ENCODE measurements at regions of chr5 and their contacts with region 1.

Region 1: GRCh38 chr5:68272289-68272688 is 56.7 kb downstream of the PIK3R1 start:
- DNase-seq: no peak
- H3K4me3 Mint-ChIP-seq: no peak overlapping the region
- H3K27ac Mint-ChIP-seq: no peak overlapping the region
- H3K4me1 Mint-ChIP-seq: peaks cover 89% of the 10 kb centered on the region
- H3K27me3 Mint-ChIP-seq: no peaks in the 10 kb centered on the region

Region 2: DNA sequence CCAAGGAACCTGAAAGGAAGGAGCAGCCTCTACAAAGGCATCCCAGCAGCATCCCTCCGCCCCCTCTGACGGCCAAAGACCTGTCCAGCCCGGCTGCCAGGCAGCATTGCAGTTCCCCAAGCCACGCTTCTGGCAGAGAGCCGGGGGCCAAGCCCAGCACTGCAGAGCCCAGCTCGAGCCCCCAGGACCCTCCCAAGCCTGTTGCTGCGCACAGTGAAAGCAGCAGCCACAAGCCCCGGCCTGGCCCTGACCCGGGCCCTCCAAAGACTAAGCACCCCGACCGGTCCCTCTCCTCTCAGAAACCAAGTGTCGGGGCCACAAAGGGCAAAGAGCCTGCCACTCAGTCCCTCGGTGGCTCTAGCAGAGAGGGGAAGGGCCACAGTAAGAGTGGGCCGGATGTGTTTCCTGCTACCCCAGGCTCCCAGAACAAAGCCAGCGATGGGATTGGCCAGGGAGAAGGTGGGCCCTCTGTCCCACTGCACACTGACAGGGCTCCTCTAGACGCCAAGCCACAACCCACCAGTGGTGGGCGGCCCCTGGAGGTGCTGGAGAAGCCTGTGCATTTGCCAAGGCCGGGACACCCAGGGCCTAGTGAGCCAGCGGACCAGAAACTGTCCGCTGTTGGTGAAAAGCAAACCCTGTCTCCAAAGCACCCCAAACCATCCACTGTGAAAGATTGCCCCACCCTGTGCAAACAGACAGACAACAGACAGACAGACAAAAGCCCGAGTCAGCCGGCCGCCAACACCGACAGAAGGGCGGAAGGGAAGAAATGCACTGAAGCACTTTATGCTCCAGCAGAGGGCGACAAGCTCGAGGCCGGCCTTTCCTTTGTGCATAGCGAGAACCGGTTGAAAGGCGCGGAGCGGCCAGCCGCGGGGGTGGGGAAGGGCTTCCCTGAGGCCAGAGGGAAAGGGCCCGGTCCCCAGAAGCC is 1106.5 kb before region 1 on chr5:
- CTCF ChIA-PET with region 1: no interaction called
- POLR2A ChIA-PET with region 1: no interaction called
- intact Hi-C with region 1: loop called (anchors 5 kb)
- DNase-seq: peak; percentile 89
- H3K4me3 Mint-ChIP-seq: peak overlapping the region; percentile 91
- H3K27ac Mint-ChIP-seq: peak overlapping the region; percentile 98
- H3K4me1 Mint-ChIP-seq: peaks cover 70% of the 10 kb centered on the region
- H3K27me3 Mint-ChIP-seq: no peaks in the 10 kb centered on the region

Region 3: DNA sequence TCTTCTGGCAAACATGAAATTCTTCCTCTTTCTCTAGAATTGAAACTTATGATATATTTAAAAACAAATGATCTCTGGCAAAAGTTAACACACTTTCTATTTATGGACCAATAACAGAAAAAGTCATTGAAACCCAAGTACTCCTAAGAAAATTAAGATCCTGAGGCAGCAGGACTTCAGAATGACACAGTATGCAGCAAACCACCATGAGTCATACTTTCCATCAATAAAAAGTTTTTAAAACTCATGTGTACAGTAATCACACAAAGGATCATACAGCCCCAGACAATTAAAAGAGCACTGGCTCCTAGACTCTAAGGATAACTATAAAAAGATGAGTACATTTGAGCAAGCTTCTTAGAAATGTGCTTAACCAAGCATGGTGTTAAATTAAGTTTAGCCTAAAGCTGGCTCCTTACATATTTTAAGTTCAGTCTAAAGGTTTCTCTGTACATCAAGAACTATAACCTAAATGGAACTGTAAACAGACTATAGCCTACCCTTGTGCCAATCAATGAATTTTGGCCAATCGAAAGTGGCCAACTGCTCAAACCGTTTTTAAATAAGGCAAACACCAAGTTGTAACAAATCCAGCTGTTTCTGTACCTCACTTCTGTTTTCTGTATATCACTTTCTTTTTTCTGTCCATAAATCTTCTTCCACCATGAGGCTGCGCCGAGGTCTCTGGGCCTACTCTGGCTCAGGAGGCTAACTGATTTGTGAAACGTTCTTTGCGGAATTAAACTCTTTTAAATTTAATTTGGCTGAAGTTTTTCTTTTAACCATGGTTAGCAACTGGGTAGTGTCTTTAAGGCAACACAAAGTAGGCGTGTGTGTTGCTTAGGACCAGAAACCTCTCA is 288.8 kb before region 1 on chr5:
- CTCF ChIA-PET with region 1: no interaction called
- POLR2A ChIA-PET with region 1: no interaction called
- intact Hi-C with region 1: loop called (anchors 10 kb)
- DNase-seq: no peak
- H3K4me3 Mint-ChIP-seq: no peak overlapping the region
- H3K27ac Mint-ChIP-seq: no peak overlapping the region
- H3K4me1 Mint-ChIP-seq: peaks cover 2% of the 10 kb centered on the region
- H3K27me3 Mint-ChIP-seq: no peaks in the 10 kb centered on the region

Region 4: GRCh38 chr5:68239487-68239886 is 32.8 kb before region 1 on chr5:
- CTCF ChIA-PET with region 1: interaction called, 3 read pairs
- POLR2A ChIA-PET with region 1: no interaction called
- intact Hi-C with region 1: loop called (anchors 2 kb)
- DNase-seq: peak; percentile 88
- H3K4me3 Mint-ChIP-seq: peak overlapping the region; percentile 52
- H3K27ac Mint-ChIP-seq: peak overlapping the region; percentile 58
- H3K4me1 Mint-ChIP-seq: peaks cover 82% of the 10 kb centered on the region
- H3K27me3 Mint-ChIP-seq: no peaks in the 10 kb centered on the region

Region 5: DNA sequence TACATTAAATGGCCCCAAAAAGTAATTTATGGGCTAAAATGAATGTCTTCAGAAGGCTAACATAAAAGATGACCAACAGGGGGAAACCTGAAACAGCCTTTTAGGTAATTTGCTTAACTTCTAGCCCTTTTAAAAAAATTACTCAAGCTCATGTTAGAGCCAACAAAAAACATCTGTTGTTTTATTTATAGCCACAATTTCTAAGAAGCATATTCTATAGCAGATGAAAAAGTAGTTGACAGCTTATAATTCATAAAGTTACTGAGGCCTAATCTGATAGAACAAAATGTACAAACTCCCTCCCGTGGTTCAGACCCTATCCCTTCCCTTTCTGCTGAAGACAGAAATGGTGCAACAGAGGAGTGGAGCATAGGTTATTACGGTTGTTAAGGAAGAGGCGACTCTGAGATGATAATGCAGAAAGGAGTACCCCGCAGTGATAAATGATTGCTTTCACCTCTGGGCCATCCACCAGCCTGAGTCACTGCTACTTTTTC is 10.7 kb before region 1 on chr5:
- CTCF ChIA-PET with region 1: interaction called, 22 read pairs
- POLR2A ChIA-PET with region 1: interaction called, 3 read pairs
- intact Hi-C with region 1: loop called (anchors 1 kb)
- DNase-seq: no peak
- H3K4me3 Mint-ChIP-seq: no peak overlapping the region
- H3K27ac Mint-ChIP-seq: peak overlapping the region; percentile 61
- H3K4me1 Mint-ChIP-seq: peaks cover 82% of the 10 kb centered on the region
- H3K27me3 Mint-ChIP-seq: no peaks in the 10 kb centered on the region

Region 6: GRCh38 chr5:68415177-68416085 is 143.1 kb after region 1 on chr5:
- CTCF ChIA-PET with region 1: no interaction called
- POLR2A ChIA-PET with region 1: no interaction called
- intact Hi-C with region 1: no loop called
- DNase-seq: no peak
- H3K4me3 Mint-ChIP-seq: no peak overlapping the region
- H3K27ac Mint-ChIP-seq: no peak overlapping the region
- H3K4me1 Mint-ChIP-seq: peaks cover 7% of the 10 kb centered on the region
- H3K27me3 Mint-ChIP-seq: no peaks in the 10 kb centered on the region

Region 7: DNA sequence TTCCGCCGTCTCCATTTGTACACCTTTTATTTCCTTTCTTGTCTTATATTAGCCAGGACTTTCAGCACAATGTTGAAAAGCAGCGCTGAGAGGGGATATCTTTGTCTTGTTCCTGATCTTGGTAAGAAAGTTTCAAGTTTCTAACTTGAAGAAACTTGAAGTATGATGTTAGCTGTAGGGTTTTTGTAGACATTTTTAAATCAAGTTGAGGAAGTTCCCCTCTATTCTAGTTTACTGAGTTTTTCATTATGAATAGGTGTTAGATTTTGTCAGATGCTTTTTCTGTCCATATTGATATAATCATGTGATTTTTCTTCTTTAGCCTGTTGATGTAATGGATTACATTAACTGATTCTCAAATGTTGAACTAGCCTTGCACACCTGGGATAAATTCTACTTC is 368.9 kb after region 1 on chr5:
- CTCF ChIA-PET with region 1: no interaction called
- POLR2A ChIA-PET with region 1: no interaction called
- intact Hi-C with region 1: no loop called
- DNase-seq: no peak
- H3K4me3 Mint-ChIP-seq: no peak overlapping the region
- H3K27ac Mint-ChIP-seq: no peak overlapping the region
- H3K4me1 Mint-ChIP-seq: no peaks in the 10 kb centered on the region
- H3K27me3 Mint-ChIP-seq: peaks cover 3% of the 10 kb centered on the region

Measured in activated CD4-positive, alpha-beta memory T cell treated with anti-CD3 and anti-CD28 coated beads for 36 hours (primary cell).